Breast epithelium (tissue), 4 donors: ENCODE measurements at regions of chr3 and their contacts with region 1.

Region 1: DNA sequence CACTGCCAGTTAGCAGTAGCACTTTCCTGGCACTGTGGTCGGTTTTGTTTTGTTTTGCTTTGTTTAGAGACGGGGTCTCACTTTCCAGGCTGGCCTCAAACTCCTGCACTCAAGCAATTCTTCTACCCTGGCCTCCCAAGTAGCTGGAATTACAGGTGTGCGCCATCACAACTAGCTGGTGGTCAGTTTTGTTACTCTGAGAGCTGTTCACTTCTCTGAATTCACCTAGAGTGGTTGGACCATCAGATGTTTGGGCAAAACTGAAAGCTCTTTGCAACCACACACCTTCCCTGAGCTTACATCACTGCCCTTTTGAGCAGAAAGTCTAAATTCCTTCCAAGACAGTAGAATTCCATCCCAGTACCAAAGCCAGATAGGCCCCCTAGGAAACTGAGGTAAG is 22.6 kb downstream of the CLDN18 start:
- DNase-seq: no peak
- H3K4me3 ChIP-seq: no peak overlapping the region
- H3K27ac ChIP-seq: no peak overlapping the region
- H3K4me1 ChIP-seq: no peaks in the 10 kb centered on the region
- H3K27me3 ChIP-seq: no peaks in the 10 kb centered on the region
- CTCF ChIP-seq: no peak
- POLR2A ChIP-seq: no peak

Region 2: GRCh38 chr3:136714020-136714419 is 1318.5 kb before region 1 on chr3:
- intact Hi-C with region 1: loop called (anchors 10 kb)
- DNase-seq: no peak
- H3K4me3 ChIP-seq: no peak overlapping the region
- H3K27ac ChIP-seq: no peak overlapping the region
- H3K4me1 ChIP-seq: no peaks in the 10 kb centered on the region
- H3K27me3 ChIP-seq: no peaks in the 10 kb centered on the region
- CTCF ChIP-seq: no peak
- POLR2A ChIP-seq: no peak